Caco-2 (cell line): ENCODE measurements at regions of chr15 and their contacts with region 1.

Region 1: DNA sequence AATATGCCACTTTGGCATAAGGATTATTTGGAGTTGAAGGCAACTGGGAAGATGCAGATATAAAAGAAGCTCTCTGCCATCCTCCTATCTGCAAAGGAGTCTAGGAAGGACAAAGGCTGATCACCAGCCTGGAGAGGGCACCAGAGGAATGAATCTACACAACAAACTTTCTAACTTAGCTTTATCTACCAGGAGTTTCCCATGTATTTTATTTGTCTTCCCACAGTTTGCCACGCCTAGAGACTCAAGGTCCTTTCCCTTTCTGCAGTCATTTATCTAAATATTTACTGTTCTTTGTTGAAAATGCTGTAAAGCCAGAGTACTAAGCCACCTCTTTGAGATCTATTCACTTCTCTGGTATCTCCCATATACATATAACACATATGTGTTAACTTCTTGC is 32.2 kb downstream of the GPR176 start:
- DNase-seq: peak; percentile 50 to 59
- H3K4me3 ChIP-seq: no peak overlapping the region
- H3K4me3 Mint-ChIP-seq: peak overlapping the region; percentile 17
- H3K27ac Mint-ChIP-seq: peak overlapping the region; percentile 57
- H3K4me1 ChIP-seq: peaks cover 57% of the 10 kb centered on the region
- H3K4me1 Mint-ChIP-seq: peaks cover 23% of the 10 kb centered on the region
- H3K27me3 ChIP-seq: no peaks in the 10 kb centered on the region
- H3K27me3 Mint-ChIP-seq: no peaks in the 10 kb centered on the region
- CTCF ChIP-seq: peak; percentile 19 to 35

Region 2: GRCh38 chr15:39756806-39757522 is 130.9 kb before region 1 on chr15:
- CTCF ChIA-PET with region 1: no interaction called
- POLR2A ChIA-PET with region 1: no interaction called
- intact Hi-C with region 1: no loop called
- DNase-seq: peak in 1 of 2 experiments; percentile 58
- H3K4me3 ChIP-seq: no peak overlapping the region
- H3K4me3 Mint-ChIP-seq: no peak overlapping the region
- H3K27ac Mint-ChIP-seq: peak overlapping the region; percentile 45
- H3K4me1 ChIP-seq: peaks cover 7% of the 10 kb centered on the region; the same call in 1 of the 2 replicates
- H3K4me1 Mint-ChIP-seq: peaks cover 24% of the 10 kb centered on the region
- H3K27me3 ChIP-seq: no peaks in the 10 kb centered on the region
- H3K27me3 Mint-ChIP-seq: no peaks in the 10 kb centered on the region
- CTCF ChIP-seq: peak; percentile 56 to 74

Region 3: DNA sequence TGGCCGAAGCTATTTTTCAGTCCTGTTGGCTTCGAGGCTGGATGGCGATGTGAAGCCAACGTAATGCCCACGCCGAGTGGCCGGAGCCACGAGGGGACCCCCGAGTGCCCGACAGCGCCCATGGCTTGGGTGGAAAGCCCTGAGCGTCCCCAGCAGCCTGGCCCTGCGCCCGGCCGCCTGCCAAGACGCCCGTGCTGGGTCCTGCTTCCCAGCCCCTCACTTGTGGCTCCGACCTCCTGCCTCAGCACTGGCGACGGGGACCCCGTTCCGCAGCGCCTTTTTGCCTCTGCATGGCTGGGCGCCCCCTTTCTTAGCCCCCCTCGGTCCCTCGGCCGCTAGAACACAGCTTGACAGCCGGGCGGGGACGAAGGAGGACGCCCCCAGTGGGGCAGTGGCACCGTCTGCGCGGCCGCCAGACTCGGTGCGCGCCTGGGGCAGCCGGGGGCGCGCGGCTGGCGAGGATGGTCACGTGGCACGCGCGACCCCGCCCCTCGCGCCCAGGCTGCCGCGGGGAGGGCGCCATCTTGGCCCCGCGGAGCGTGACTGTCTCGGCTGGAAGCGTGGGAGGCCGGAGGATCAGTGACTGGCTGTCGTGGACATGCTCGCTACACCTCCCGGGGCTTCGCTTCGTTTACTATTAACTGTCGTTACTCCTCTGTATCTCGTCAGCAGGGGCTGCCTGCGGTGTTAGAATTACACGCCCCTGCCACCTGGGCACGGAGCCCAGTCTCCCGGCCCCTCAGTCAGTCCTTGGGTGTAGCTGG is 32.9 kb after region 1 on chr15:
- CTCF ChIA-PET with region 1: interaction called, 16 read pairs
- POLR2A ChIA-PET with region 1: no interaction called
- intact Hi-C with region 1: loop called (anchors 1 kb)
- DNase-seq: peak; percentile 66 to 85
- H3K4me3 ChIP-seq: peak overlapping the region; percentile 88
- H3K4me3 Mint-ChIP-seq: peak overlapping the region; percentile 90
- H3K27ac Mint-ChIP-seq: peak overlapping the region; percentile 80
- H3K4me1 ChIP-seq: peaks cover 23% of the 10 kb centered on the region
- H3K4me1 Mint-ChIP-seq: peaks cover 27% of the 10 kb centered on the region
- H3K27me3 ChIP-seq: no peaks in the 10 kb centered on the region
- H3K27me3 Mint-ChIP-seq: no peaks in the 10 kb centered on the region
- CTCF ChIP-seq: no peak

Region 4: GRCh38 chr15:39934397-39935071 is 46.7 kb after region 1 on chr15:
- CTCF ChIA-PET with region 1: interaction called, 31 read pairs
- POLR2A ChIA-PET with region 1: interaction called, 5 read pairs
- intact Hi-C with region 1: no loop called
- DNase-seq: no peak
- H3K4me3 ChIP-seq: peak overlapping the region; percentile 86
- H3K4me3 Mint-ChIP-seq: peak overlapping the region; percentile 92
- H3K27ac Mint-ChIP-seq: peak overlapping the region; percentile 87
- H3K4me1 ChIP-seq: peaks cover 17% of the 10 kb centered on the region; the same call in 1 of the 2 replicates
- H3K4me1 Mint-ChIP-seq: peaks cover 10% of the 10 kb centered on the region
- H3K27me3 ChIP-seq: no peaks in the 10 kb centered on the region
- H3K27me3 Mint-ChIP-seq: no peaks in the 10 kb centered on the region
- CTCF ChIP-seq: no peak

Region 5: DNA sequence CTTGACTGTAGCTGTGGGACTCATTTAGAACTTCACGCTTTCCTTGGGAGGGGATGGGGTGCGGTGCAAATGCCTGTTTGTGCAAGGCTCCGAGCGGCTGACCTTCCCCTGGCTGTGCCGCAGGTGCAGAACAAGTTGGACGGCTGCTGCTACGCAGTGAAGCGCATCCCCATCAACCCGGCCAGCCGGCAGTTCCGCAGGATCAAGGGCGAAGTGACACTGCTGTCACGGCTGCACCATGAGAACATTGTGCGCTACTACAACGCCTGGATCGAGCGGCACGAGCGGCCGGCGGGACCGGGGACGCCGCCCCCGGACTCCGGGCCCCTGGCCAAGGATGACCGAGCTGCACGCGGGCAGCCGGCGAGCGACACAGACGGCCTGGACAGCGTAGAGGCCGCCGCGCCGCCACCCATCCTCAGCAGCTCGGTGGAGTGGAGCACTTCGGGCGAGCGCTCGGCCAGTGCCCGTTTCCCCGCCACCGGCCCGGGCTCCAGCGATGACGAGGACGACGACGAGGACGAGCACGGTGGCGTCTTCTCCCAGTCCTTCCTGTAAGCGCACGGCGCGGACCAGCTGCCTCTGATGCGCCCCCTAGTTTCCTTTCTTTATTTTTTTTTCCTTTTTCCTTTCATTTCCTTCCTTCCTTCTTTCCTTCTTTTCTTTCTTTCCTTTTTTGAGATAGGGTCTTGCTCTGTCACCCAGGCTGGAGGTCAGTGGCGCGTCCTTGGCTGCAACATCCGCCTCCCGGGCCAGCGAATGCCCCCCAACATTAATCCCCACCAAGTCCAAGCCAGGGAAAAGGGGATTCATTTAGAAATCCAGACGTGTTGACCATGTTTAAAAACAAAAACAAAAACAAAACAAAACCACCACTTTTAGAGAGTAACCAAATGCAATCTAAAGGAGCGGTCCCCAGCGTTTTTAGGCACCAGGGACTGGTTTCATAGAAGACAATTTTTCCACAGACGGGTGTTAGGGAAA is 88.8 kb after region 1 on chr15:
- CTCF ChIA-PET with region 1: interaction called, 4 read pairs
- POLR2A ChIA-PET with region 1: no interaction called
- intact Hi-C with region 1: loop called (anchors 1 kb)
- DNase-seq: peak; percentile 75 to 81
- H3K4me3 ChIP-seq: peak overlapping the region; percentile 74
- H3K4me3 Mint-ChIP-seq: peak overlapping the region; percentile 75
- H3K27ac Mint-ChIP-seq: peak overlapping the region; percentile 85
- H3K4me1 ChIP-seq: peaks cover 3% of the 10 kb centered on the region; the same call in 1 of the 2 replicates
- H3K4me1 Mint-ChIP-seq: peaks cover 6% of the 10 kb centered on the region
- H3K27me3 ChIP-seq: no peaks in the 10 kb centered on the region
- H3K27me3 Mint-ChIP-seq: no peaks in the 10 kb centered on the region
- CTCF ChIP-seq: peak in 1 of 2 experiments; percentile 58

Region 6: GRCh38 chr15:40108855-40109735 is 221.3 kb after region 1 on chr15 and contains the start of gene BMF:
- CTCF ChIA-PET with region 1: no interaction called
- POLR2A ChIA-PET with region 1: no interaction called
- intact Hi-C with region 1: no loop called
- DNase-seq: peak; percentile 98 to 99
- H3K4me3 ChIP-seq: peak within 1 kb of the TSS; percentile 61
- H3K4me3 Mint-ChIP-seq: peak within 1 kb of the TSS; percentile 93
- H3K27ac Mint-ChIP-seq: peak within 1 kb of the TSS; percentile 96
- H3K4me1 ChIP-seq: peaks cover 34% of the 10 kb centered on the region
- H3K4me1 Mint-ChIP-seq: peaks cover 34% of the 10 kb centered on the region
- H3K27me3 ChIP-seq: no peaks in the 10 kb centered on the region
- H3K27me3 Mint-ChIP-seq: no peaks in the 10 kb centered on the region
- CTCF ChIP-seq: peak; percentile 33 to 54
- total RNA-seq, gene BMF: 78.2 and 81.5 TPM in 2 replicates